Dendritic cell treated with granulocyte-macrophage colony-stimulating factor and Interleukin-4, amounts not matched to agents 40 ng/mL and 50 ng/mL, for 4 days (primary cell): ENCODE measurements at regions of chr4 and their contacts with region 1.

Region 1: DNA sequence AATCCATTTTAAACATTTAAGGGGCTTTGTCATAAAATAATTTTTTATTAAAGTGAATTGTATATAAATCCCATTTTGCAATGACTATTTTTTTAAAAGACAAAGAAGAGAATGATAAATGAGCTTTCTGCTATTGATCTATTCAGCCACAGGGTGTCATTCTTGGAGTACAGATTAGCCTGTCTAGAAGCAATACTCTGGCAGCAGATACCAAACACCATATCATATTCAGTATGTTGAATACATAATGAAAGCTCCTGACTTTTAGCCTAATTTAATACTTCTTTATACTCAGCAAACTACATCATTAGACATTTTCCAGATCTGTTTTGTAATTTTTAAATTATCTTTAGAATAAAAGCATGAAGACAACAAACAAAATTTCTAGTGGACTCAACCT is 496.3 kb downstream of the PDGFC start:
- H3K4me3 Mint-ChIP-seq: no peak overlapping the region
- H3K27ac Mint-ChIP-seq: no peak overlapping the region
- H3K4me1 Mint-ChIP-seq: no peaks in the 10 kb centered on the region
- H3K27me3 Mint-ChIP-seq: no peaks in the 10 kb centered on the region

Region 2: GRCh38 chr4:155906554-155907247 is 568.6 kb before region 1 on chr4:
- intact Hi-C with region 1: no loop called
- H3K4me3 Mint-ChIP-seq: no peak overlapping the region
- H3K27ac Mint-ChIP-seq: no peak overlapping the region
- H3K4me1 Mint-ChIP-seq: peaks cover 7% of the 10 kb centered on the region
- H3K27me3 Mint-ChIP-seq: no peaks in the 10 kb centered on the region

Region 3: DNA sequence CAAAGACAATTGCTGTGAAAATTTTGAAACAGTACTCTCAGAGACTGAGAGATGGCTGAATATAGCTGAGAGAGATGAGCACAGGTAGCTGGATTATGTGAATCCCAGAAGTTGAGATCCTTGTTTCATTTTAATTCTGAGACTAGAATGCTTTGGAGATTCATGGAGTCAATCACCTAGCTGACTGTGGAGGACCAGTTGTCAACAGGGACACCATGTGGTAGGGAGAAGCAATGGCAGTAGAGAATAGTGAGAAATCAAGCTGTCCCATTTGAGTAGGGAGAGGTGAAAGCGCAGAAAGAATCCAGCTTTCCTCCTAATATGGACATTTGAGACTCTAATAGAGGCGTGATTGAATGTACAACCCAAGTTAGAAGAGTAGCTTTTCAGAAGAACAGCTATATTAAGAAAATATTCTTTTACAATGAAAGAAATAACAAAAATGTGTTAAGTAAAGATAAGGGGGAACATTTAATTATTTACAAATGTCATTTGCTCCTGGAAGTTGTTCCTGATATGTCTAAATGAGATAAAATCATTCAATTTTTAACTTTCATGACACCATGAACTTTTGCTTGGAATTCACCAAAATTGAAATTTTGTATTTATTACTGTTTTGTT is 570.3 kb after region 1 on chr4:
- intact Hi-C with region 1: loop called (anchors 1 kb)
- H3K4me3 Mint-ChIP-seq: no peak overlapping the region
- H3K27ac Mint-ChIP-seq: no peak overlapping the region
- H3K4me1 Mint-ChIP-seq: no peaks in the 10 kb centered on the region
- H3K27me3 Mint-ChIP-seq: no peaks in the 10 kb centered on the region

Region 4: DNA sequence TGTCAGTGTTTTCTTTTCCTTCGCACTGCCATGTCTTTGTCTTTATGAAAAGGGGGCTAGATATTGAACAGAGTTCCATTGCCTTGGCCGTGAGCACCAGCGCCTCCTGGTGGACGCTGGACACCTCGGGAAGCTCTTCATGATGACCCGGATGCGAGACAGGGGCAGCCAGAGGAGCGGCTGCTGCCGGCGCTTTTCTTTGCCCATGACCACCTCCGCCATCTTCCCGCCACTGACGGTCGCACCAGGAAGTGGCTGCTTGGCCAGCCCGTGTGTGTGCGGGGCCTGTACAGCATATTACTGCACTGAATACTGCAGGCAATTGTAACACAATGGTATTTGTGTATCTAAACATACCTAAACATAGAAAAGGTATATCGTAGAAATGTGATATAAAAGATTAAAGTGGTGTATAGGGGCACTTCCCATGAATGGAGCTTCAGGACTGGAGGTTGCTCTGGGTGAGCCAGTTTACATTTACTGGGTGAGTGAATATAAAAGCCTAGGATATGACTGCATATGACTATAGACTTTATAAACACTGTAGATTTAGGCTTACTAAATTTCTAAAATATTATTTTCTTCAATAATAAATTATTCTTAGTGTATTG is 729.4 kb after region 1 on chr4:
- intact Hi-C with region 1: loop called (anchors 1 kb)
- H3K4me3 Mint-ChIP-seq: no peak overlapping the region
- H3K27ac Mint-ChIP-seq: no peak overlapping the region
- H3K4me1 Mint-ChIP-seq: no peaks in the 10 kb centered on the region
- H3K27me3 Mint-ChIP-seq: no peaks in the 10 kb centered on the region

Region 5: GRCh38 chr4:157978680-157979361 is 1503.5 kb after region 1 on chr4:
- intact Hi-C with region 1: loop called (anchors 10 kb)
- H3K4me3 Mint-ChIP-seq: peak overlapping the region; percentile 28
- H3K27ac Mint-ChIP-seq: no peak overlapping the region
- H3K4me1 Mint-ChIP-seq: peaks cover 16% of the 10 kb centered on the region
- H3K27me3 Mint-ChIP-seq: peaks cover 2% of the 10 kb centered on the region